MCF 10A (cell line): ENCODE measurements at regions of chr6 and their contacts with region 1.

Region 1: GRCh38 chr6:71383901-71384489 is 95.4 kb downstream of the OGFRL1 start:
- DNase-seq: peak; percentile 56
- H3K4me3 Mint-ChIP-seq: no peak overlapping the region
- H3K27ac Mint-ChIP-seq: no peak overlapping the region
- H3K4me1 Mint-ChIP-seq: peaks cover 14% of the 10 kb centered on the region
- H3K27me3 Mint-ChIP-seq: no peaks in the 10 kb centered on the region
- CTCF ChIP-seq: peak; percentile 45

Region 2: GRCh38 chr6:71393981-71394432 is 10.0 kb after region 1 on chr6:
- CTCF ChIA-PET with region 1: interaction called, 13 read pairs
- POLR2A ChIA-PET with region 1: no interaction called
- intact Hi-C with region 1: no loop called
- DNase-seq: peak; percentile 59
- H3K4me3 Mint-ChIP-seq: peak overlapping the region; percentile 19
- H3K27ac Mint-ChIP-seq: peak overlapping the region; percentile 31
- H3K4me1 Mint-ChIP-seq: peaks cover 39% of the 10 kb centered on the region
- H3K27me3 Mint-ChIP-seq: no peaks in the 10 kb centered on the region
- CTCF ChIP-seq: no peak

Region 3: DNA sequence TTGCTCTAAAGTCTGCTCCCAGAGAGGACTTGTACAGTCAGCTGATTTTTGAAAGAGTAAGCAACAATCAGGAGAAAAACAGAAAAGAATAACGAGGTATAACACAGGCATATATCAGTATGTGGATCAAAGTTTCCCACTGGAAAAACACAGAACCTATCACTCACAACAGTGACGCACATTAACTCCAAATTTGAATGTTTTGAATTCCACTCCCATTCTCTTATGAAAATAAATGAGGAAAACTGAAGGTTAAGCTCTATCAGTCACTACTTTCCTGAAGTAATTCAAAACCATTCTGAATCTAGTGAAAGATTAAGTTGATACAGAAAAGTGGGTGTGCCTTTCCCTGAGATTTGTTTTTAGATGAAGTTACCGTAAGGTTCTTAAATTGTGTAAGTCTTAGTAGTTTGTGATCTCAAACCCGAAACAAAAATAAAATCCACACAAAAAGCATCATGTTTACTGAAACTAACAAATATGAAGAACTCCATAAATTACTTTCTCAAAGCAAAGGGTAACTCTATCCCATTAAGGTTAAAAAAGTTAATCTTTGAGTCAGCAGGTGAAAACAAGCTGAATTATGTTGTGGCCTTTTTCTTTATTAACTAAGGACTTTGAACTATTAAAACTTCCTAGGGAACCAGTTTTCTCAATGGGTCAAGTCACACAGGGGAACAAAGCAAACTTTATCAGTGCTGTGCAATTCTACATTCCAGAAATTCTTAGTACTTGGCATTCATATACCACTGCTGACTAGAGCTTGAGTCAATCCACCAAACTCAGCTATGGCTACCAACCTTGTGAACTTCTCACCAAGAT is 20.4 kb after region 1 on chr6:
- CTCF ChIA-PET with region 1: interaction called, 5 read pairs
- POLR2A ChIA-PET with region 1: interaction called, 11 read pairs
- intact Hi-C with region 1: no loop called
- DNase-seq: peak; percentile 54
- H3K4me3 Mint-ChIP-seq: peak overlapping the region; percentile 64
- H3K27ac Mint-ChIP-seq: peak overlapping the region; percentile 75
- H3K4me1 Mint-ChIP-seq: peaks cover 26% of the 10 kb centered on the region
- H3K27me3 Mint-ChIP-seq: no peaks in the 10 kb centered on the region
- CTCF ChIP-seq: no peak

Region 4: DNA sequence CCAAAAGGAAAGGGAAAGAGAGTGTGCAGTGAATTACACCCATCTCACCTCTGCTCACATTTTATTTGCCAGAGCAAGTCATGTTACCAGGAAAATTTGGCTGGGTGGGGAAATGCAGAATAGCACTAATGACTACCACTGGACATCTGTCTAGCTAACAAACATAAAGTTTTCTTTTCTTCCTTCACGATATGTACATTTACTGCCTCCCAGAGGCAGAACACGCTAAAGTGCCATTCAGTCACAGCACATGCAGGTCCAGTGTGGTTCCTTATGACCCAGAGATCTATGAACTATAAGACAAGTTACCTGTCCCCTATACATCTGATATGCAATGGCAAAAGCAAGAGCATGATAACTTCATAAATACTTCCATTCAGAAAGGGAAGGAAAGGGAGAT is 98.7 kb after region 1 on chr6:
- CTCF ChIA-PET with region 1: interaction called, 18 read pairs
- POLR2A ChIA-PET with region 1: no interaction called
- intact Hi-C with region 1: loop called (anchors 1 kb)
- DNase-seq: peak; percentile 26
- H3K4me3 Mint-ChIP-seq: no peak overlapping the region
- H3K27ac Mint-ChIP-seq: no peak overlapping the region
- H3K4me1 Mint-ChIP-seq: peaks cover 17% of the 10 kb centered on the region
- H3K27me3 Mint-ChIP-seq: no peaks in the 10 kb centered on the region
- CTCF ChIP-seq: peak; percentile 36

Region 5: DNA sequence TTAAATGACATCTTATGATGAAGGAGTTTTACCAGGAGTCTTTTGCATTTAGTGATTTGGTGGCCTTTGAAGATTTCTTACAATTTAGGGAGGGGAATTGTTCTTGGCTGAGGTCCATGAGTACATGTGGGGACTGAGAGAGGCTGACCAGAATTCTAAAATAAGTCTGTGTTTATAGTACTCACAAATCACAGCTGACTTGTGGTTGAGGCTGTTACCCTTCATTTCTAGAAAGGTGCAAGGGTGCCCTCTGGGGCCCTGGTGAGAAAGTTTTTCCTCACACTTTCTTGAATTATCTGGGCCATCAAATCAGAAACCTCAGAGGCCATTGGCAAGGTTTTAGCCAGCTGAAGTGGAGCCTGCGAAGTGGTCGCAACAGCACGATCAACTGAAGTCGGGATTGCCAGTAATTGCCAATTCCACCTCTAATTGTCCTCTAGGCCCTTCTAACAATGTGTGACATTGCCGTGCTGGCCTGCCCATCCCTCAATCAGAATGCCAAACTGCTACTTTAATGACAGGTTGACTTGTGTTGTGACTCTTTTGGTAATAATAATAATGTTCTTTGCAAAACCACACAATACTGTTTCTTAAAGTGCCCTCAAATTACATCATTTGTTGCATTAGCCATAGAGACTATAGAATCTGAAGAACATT is 126.2 kb after region 1 on chr6:
- CTCF ChIA-PET with region 1: interaction called, 110 read pairs
- POLR2A ChIA-PET with region 1: no interaction called
- intact Hi-C with region 1: loop called (anchors 1 kb)
- DNase-seq: peak; percentile 67
- H3K4me3 Mint-ChIP-seq: no peak overlapping the region
- H3K27ac Mint-ChIP-seq: peak overlapping the region; percentile 7
- H3K4me1 Mint-ChIP-seq: peaks cover 6% of the 10 kb centered on the region
- H3K27me3 Mint-ChIP-seq: no peaks in the 10 kb centered on the region
- CTCF ChIP-seq: peak; percentile 64

Region 6: DNA sequence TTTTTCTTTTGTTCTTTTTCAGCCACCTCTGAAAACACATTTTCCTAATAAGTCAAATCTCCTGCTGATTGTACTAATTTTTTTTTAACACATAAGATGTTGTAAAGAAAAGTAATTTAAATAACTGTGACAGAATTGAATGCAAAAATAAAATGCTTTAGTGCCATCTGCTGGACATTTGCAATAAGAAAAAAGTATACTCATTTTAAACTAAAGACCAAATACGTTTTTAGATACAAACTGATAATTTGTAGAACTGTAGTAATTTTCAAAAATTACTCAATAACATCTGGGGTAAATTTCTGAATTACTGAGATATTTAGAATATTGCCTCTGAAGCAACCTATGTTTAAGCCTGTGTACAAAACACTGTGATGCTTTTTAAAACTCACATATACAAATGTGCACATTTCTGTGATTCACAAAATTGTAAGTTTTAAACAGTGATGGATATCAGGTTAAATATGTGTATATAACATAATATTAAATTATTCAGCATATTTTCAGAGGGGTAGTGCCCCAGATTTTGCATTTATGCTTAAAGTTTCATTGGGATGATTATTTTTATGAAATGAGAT is 701.1 kb after region 1 on chr6:
- CTCF ChIA-PET with region 1: interaction called, 4 read pairs
- POLR2A ChIA-PET with region 1: no interaction called
- intact Hi-C with region 1: loop called (anchors 2 kb)
- DNase-seq: peak; percentile 14
- H3K4me3 Mint-ChIP-seq: no peak overlapping the region
- H3K27ac Mint-ChIP-seq: no peak overlapping the region
- H3K4me1 Mint-ChIP-seq: no peaks in the 10 kb centered on the region
- H3K27me3 Mint-ChIP-seq: peaks cover 67% of the 10 kb centered on the region
- CTCF ChIP-seq: peak; percentile 42